Heart right ventricle (tissue), 16 donors: ENCODE measurements at regions of chr22 and their contacts with region 1.

Region 1: DNA sequence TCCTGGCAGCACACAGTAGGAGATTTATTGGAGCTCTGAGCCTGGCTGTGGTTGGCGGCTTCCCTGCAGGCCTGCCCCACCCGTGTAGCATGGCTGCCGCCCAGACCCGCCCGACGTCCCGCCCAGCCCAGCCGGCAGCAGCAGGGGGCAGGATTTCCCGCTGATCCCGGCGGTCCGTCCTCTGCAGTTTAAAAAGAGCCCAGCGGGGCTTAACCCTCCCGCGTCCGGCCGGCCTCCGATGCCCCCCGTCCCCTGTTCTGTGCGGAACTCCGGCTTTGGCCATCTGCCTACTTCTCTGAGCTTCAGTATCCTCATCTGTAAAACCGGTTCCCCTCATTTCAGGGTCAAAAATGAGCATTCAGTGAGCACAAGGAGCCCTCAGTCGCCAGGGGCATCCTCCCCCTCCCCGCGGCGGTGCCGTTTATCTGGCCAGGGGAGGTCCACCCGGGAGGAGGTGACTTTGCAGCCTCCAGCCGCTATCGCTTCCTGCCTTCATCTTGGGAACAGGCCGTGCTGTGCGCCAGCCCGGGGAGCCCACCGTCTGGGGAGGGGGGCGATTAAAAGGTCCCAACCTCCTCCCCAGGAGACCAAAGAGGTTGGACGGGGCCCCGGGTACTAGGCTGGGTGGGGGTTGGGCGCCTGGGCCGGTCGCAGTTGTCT is at the start of gene GAS2L1:
- DNase-seq: peak; percentile 89 to 90
- ATAC-seq: peak; percentile 65 to 82 (median 77)
- H3K4me3 ChIP-seq: peak within 1 kb of the TSS; percentile 70 to 98 (median 94)
- H3K27ac ChIP-seq: peak within 1 kb of the TSS; percentile 90 to 98 (median 94)
- H3K4me1 ChIP-seq: peaks cover 36 to 67% (median 54%) of the 10 kb centered on the region in 9 donors
- H3K27me3 ChIP-seq: no peaks in the 10 kb centered on the region
- CTCF ChIP-seq: peak; percentile 59 to 90 (median 78)
- total RNA-seq, gene GAS2L1: 10.9 to 35.4 (median 13.6) TPM

Region 2: DNA sequence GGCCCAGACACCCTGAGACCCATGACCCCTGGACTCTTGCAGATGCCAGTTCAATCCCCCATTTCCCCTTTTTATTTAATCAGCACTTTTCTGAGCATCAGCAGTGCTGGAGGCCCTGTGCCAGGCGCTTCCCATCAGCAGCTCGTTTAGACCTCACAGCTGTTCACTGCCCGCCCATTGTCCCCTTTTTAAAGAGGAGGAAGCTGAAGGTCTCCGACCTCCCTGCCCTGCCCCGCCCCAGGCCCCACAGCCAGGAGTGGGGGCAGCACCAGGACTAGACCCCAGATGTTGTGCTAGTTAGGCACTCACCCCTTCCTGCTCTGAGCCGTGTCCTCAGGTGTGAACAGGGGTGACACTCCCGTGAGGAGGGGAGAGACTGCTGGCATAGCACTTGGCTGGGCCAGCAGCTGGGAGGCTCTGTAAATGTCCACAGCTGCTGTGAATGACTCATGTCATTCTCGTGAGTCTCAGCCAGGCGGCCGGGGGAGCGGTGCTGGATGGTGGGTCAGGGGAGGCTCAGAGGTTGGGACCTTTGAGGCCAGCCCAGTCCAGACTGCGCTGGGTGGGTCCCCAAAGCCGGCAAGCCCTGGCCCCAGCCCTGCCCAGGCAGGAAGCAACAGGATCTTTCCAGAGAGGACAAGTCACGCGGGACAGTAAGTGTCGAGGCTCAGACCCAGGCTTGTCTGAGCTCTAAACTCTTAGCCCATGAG is 80.7 kb before region 1 on chr22:
- intact Hi-C with region 1: no loop called
- DNase-seq: peak; percentile 50 to 69
- ATAC-seq: peak; percentile 65 to 91 (median 79)
- H3K4me3 ChIP-seq: no peak overlapping the region
- H3K27ac ChIP-seq: peak overlapping the region in 4 of 10 donors; percentile 4 to 66 (median 45)
- H3K4me1 ChIP-seq: peaks cover 4 to 16% (median 15%) of the 10 kb centered on the region in 9 donors
- H3K27me3 ChIP-seq: peaks cover 0 to 4% (median 0%) of the 10 kb centered on the region in 7 donors
- CTCF ChIP-seq: no peak

Region 3: DNA sequence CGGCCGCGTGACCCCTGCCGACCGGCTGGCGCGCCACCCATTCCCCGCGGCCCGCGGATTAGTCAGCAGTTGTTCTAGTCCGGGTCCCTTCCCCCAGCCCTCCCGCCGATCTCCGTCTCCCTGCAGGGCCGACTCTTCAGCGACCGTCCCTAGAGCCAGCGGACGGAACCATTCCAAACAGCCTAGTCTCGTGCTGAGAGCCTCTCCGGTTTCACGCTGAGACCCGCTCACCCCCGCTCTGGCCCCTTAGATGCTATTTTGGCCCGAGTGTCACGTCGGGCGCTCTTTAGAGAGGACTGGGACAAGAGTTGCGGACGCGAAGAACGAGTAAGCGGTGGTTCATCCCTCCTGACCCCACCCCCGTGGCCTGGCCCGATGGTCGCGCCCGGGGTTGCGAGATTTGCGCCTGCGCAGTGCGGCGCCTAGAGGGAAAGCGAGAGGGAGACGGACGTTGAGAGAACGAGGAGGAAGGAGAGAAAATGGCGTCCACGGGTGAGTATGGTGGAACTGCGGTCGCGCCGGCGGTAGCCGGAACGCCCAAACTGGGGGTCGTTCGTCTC is 38.4 kb before region 1 on chr22 and contains the starts of genes EWSR1 and RHBDD3:
- intact Hi-C with region 1: loop called in 3 of 10 experiments (anchors 2 to 5 kb)
- DNase-seq: peak; percentile 96 to 97
- ATAC-seq: peak; percentile 92 to 97 (median 95)
- H3K4me3 ChIP-seq: peak within 1 kb of the TSS; percentile 71 to 98 (median 82)
- H3K27ac ChIP-seq: peak within 1 kb of the TSS; percentile 98 to 100 (median 99)
- H3K4me1 ChIP-seq: peaks cover 13 to 59% (median 55%) of the 10 kb centered on the region in 9 donors
- H3K27me3 ChIP-seq: no peaks in the 10 kb centered on the region
- CTCF ChIP-seq: peak in 1 of 9 donors; percentile 10
- total RNA-seq, gene EWSR1: 131 to 153 (median 139) TPM
- total RNA-seq, gene RHBDD3: 7.0 to 18.0 (median 12.2) TPM

Region 4: DNA sequence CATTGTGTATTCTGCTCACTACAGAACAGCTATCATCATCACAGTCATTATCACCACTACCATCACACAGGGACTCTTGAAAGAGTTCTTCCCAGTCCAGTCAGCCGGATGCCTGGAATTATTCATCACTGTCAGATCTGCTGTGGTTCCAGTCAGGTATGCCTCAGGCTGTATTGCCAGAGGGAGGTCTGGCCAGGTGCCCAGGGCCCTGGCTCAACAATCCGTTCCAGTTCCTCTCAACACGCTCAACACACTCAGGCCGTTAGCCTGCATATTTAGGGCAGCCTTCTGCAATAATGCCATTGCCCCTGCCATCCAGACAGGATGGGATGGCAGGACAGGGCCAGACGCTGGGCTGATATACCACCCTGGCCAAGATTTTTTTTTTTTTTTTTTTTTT is 37.8 kb after region 1 on chr22:
- intact Hi-C with region 1: loop called in 3 of 10 experiments (anchors 1 to 5 kb)
- DNase-seq: peak; percentile 57 to 68
- ATAC-seq: peak; percentile 44 to 91 (median 79)
- H3K4me3 ChIP-seq: no peak overlapping the region
- H3K27ac ChIP-seq: peak overlapping the region in 8 of 10 donors; percentile 11 to 64 (median 50)
- H3K4me1 ChIP-seq: peaks cover 0 to 55% (median 30%) of the 10 kb centered on the region in 9 donors
- H3K27me3 ChIP-seq: no peaks in the 10 kb centered on the region
- CTCF ChIP-seq: no peak

Region 5: GRCh38 chr22:29359469-29359868 is 53.2 kb after region 1 on chr22:
- intact Hi-C with region 1: loop called in 7 of 10 experiments (anchors 1 to 5 kb)
- DNase-seq: peak; percentile 64 to 66
- ATAC-seq: peak; percentile 70 to 90 (median 80)
- H3K4me3 ChIP-seq: no peak overlapping the region
- H3K27ac ChIP-seq: no peak overlapping the region
- H3K4me1 ChIP-seq: peaks cover 0 to 24% (median 17%) of the 10 kb centered on the region in 9 donors
- H3K27me3 ChIP-seq: no peaks in the 10 kb centered on the region
- CTCF ChIP-seq: peak; percentile 38 to 83 (median 70)